Activated CD8-positive, alpha-beta T cell treated with anti-CD3 and anti-CD28 coated beads for 36 hours (primary cell): ENCODE measurements at regions of chr5 and their contacts with region 1.

Region 1: GRCh38 chr5:140362860-140363630 is 3.1 kb downstream of the SLC4A9 start:
- DNase-seq: peak; percentile 91
- ATAC-seq: peak; percentile 96
- H3K4me3 Mint-ChIP-seq: peak overlapping the region; percentile 70
- H3K27ac Mint-ChIP-seq: no peak overlapping the region
- H3K4me1 Mint-ChIP-seq: peaks cover 5% of the 10 kb centered on the region
- H3K27me3 Mint-ChIP-seq: peaks cover 6% of the 10 kb centered on the region
- CTCF ChIP-seq: peak; percentile 91

Region 2: GRCh38 chr5:139439013-139439903 is 923.8 kb before region 1 on chr5 and contains the start of gene DNAJC18:
- CTCF ChIA-PET with region 1: no interaction called
- POLR2A ChIA-PET with region 1: no interaction called
- intact Hi-C with region 1: no loop called
- DNase-seq: peak; percentile 98
- ATAC-seq: peak; percentile 91
- H3K4me3 Mint-ChIP-seq: peak within 1 kb of the TSS; percentile 91
- H3K27ac Mint-ChIP-seq: peak within 1 kb of the TSS; percentile 96
- H3K4me1 Mint-ChIP-seq: peaks cover 42% of the 10 kb centered on the region
- H3K27me3 Mint-ChIP-seq: no peaks in the 10 kb centered on the region
- CTCF ChIP-seq: no peak
- total RNA-seq, gene DNAJC18: 24.9 to 27.5 TPM

Region 3: GRCh38 chr5:140718241-140718580 is 355.2 kb after region 1 on chr5:
- CTCF ChIA-PET with region 1: interaction called, 10 read pairs
- POLR2A ChIA-PET with region 1: no interaction called
- intact Hi-C with region 1: loop called (anchors 10 kb)
- DNase-seq: no peak
- ATAC-seq: no peak
- H3K4me3 Mint-ChIP-seq: no peak overlapping the region
- H3K27ac Mint-ChIP-seq: no peak overlapping the region
- H3K4me1 Mint-ChIP-seq: peaks cover under 1% of the 10 kb centered on the region
- H3K27me3 Mint-ChIP-seq: peaks cover 5% of the 10 kb centered on the region
- CTCF ChIP-seq: no peak